ENCODE measurements at regions of chr1 and their contacts with region 1.

Region 1: DNA sequence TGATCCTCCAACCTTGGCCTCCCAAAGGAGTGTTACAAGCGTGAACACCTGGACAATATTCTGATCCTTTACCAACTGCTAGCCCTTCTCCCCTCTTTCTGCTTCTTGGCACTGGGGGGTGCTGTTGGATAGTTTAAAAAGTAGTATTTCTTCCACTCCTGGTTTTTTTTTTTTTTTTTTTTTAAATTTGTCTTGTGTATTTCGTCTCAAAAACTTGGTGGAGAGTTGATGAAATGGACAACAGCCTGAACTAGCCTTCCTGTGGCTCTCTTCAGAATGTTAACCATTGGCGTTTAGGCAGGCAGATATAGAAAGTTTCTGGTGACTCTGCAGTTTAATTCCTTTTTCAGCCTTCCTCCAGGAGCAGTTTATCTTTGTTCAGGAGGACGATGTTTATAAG is 69.7 kb upstream of the USP24 start:
- DNase-seq: peak; percentile 10
- H3K4me3 ChIP-seq: no peak overlapping the region
- H3K27ac ChIP-seq: no peak overlapping the region
- H3K4me1 ChIP-seq: no peaks in the 10 kb centered on the region
- H3K27me3 ChIP-seq: no peaks in the 10 kb centered on the region
- CTCF ChIP-seq: peak in 3 of 4 experiments; percentile 29 to 38 (median 36)
- POLR2A ChIP-seq: no peak

Region 2: DNA sequence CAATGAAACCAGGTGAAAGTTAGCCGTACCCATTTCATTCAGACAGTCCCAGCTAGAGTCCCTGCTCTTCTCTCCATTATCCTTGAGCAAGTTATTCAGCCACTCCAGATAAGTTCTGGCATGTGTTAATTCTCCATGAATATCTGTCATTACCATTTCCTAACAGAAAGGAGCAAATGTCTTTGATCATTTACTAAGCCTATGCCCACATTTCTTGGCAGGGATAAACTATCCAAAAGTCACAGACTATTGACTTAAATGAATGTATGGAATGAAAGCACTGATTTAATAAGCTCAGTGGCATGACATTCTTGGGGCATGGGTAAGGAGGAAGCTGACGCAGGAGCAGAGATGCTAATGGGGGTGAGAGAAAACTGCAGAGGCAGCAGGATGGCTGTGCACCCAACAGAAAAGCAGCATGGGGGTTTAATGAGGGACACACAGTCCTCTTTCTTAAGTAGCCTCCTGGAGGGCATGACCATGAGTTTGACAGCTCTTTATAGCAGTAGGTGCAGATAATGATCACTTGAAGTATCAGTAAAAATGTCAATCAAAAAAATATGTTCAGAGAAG is 380.3 kb before region 1 on chr1:
- intact Hi-C with region 1: no loop called
- DNase-seq: peak; percentile 64
- H3K4me3 ChIP-seq: no peak overlapping the region
- H3K27ac ChIP-seq: peak overlapping the region in 1 of 2 donors; percentile 18
- H3K4me1 ChIP-seq: peaks cover 4% of the 10 kb centered on the region
- H3K27me3 ChIP-seq: no peaks in the 10 kb centered on the region
- CTCF ChIP-seq: no peak
- POLR2A ChIP-seq: no peak

Region 3: DNA sequence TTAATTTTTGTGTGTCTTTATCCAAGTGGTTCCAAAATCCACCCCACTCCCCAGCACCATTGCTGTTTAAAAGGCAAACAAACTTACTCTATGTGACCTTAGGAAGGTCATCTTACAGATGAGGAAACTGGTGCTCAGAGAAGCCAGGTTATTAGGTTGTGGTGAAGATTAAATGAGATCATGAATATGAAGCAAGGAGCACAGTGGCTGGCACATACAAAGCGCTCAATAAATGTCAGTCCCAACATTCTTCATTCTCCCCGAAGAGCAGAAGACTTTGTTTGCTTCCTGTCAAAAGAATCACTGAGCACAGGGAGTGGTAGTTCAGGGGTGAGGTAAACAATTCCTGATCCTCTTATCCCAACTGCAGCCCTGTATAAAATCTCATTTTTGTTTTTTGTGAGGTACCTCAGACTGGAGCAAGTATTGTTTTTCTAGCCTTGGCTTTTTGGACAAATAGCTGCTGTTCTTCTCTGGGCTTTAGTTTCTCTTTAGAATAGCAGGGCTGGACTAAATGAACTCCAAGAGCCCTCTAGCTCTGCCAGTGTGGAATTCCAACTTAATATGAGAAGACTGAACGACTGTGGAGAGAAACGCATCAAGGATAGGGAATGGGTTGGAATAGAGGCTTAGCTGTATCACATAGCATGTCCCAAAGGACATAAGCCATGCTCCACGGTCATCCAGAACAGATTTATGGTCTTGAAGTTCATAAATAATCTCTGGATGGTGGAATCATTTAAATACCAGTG is 385.7 kb after region 1 on chr1:
- intact Hi-C with region 1: loop called (anchors 10 kb)
- DNase-seq: no peak
- H3K4me3 ChIP-seq: no peak overlapping the region
- H3K27ac ChIP-seq: peak overlapping the region in 1 of 2 donors; percentile 14
- H3K4me1 ChIP-seq: no peaks in the 10 kb centered on the region
- H3K27me3 ChIP-seq: no peaks in the 10 kb centered on the region
- CTCF ChIP-seq: no peak
- POLR2A ChIP-seq: no peak

Region 4: DNA sequence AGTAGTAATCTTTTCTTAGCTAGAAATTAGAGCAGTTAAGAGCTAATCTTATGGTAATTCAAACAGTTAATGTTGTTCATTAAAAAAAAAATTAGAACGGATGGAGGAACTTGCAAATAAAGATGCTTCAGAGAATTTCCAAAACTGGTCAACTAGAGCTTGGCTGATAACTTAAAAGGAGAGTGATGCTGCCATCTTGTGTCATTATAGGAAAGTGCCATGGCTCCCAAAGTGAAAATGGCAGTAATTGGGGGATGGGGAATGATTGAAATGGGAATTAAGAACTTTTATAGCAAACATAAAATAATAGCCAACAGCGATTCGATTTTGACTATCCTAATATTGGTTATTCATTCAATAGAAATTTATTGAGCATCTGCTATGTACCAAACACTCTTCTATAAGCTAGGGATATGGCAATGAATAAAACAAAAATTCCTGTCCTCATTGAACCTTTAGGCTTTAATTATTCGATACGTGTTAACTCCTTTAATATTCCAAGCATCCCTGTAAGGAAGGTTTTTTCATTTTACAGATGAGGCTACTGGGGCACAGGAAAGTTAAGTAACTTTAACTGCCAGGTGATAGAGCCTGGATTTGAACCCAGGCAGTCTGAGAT is 1300.2 kb after region 1 on chr1:
- intact Hi-C with region 1: loop called (anchors 2 kb)
- DNase-seq: peak; percentile 30
- H3K4me3 ChIP-seq: no peak overlapping the region
- H3K27ac ChIP-seq: no peak overlapping the region
- H3K4me1 ChIP-seq: no peaks in the 10 kb centered on the region
- H3K27me3 ChIP-seq: no peaks in the 10 kb centered on the region
- CTCF ChIP-seq: peak; percentile 51 to 89 (median 84)
- POLR2A ChIP-seq: no peak

Region 5: GRCh38 chr1:56709269-56709880 is 1424.5 kb after region 1 on chr1:
- intact Hi-C with region 1: loop called (anchors 5 kb)
- DNase-seq: peak; percentile 36
- H3K4me3 ChIP-seq: no peak overlapping the region
- H3K27ac ChIP-seq: no peak overlapping the region
- H3K4me1 ChIP-seq: no peaks in the 10 kb centered on the region
- H3K27me3 ChIP-seq: no peaks in the 10 kb centered on the region
- CTCF ChIP-seq: peak; percentile 45 to 78 (median 65)
- POLR2A ChIP-seq: no peak

Region 6: GRCh38 chr1:56821140-56821797 is 1536.4 kb after region 1 on chr1:
- intact Hi-C with region 1: loop called (anchors 10 kb)
- DNase-seq: peak; percentile 77
- H3K4me3 ChIP-seq: no peak overlapping the region
- H3K27ac ChIP-seq: no peak overlapping the region
- H3K4me1 ChIP-seq: peaks cover 14% of the 10 kb centered on the region
- H3K27me3 ChIP-seq: no peaks in the 10 kb centered on the region
- CTCF ChIP-seq: peak; percentile 72 to 93 (median 88)
- POLR2A ChIP-seq: no peak

Measured in prostate gland (tissue), 2 donors.